Left ventricle myocardium inferior (tissue), 1 donor: ENCODE measurements at regions of chr22 and their contacts with region 1.

Region 1: GRCh38 chr22:20205964-20206708 is 55.3 kb upstream of the CCDC188 start:
- DNase-seq: peak; percentile 67
- H3K4me3 ChIP-seq: peak overlapping the region; percentile 73
- H3K27ac ChIP-seq: peak overlapping the region; percentile 89
- H3K4me1 ChIP-seq: peaks cover 60% of the 10 kb centered on the region
- H3K27me3 ChIP-seq: no peaks in the 10 kb centered on the region
- CTCF ChIP-seq: no peak

Region 2: GRCh38 chr22:20052309-20053259 is 153.6 kb before region 1 on chr22:
- intact Hi-C with region 1: no loop called
- DNase-seq: no peak
- H3K4me3 ChIP-seq: no peak overlapping the region
- H3K27ac ChIP-seq: no peak overlapping the region
- H3K4me1 ChIP-seq: peaks cover 20% of the 10 kb centered on the region
- H3K27me3 ChIP-seq: no peaks in the 10 kb centered on the region
- CTCF ChIP-seq: no peak

Region 3: DNA sequence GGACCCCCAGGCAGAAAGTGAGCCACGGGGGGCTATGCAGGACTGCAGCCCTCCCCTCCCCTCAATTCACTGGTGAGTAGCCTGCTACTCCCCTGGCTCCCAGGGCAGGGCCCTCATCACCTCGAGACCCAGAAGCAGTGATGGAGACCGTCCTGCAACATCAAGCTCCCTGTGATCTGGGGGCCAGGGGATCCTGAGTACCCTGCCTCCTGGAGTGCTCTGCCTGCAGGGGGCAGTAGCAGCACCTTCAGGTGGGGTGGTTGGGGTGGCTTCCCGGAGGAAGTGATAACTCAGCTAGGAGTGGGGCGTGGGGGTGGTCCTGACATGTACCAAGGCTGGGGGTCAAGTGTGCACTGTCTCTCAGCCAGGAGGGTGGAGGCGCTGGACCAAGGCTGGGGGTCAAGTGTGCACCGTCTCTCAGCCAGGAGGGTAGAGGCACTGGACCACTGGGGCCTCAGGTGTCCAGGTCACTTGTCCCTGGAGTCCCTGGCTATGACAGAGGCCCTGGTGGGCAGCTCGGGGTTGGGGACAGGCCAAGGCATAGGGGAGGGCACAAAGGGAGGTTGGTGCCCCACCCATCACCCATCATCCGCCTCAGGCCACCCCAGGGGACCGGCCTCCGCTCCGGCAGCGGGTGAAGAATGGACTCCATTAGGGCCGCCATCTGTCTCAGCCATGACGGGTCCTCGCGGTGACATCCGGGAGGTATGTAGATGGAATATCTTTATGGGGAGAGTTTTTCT is 52.6 kb after region 1 on chr22:
- intact Hi-C with region 1: loop called (anchors 10 kb)
- DNase-seq: no peak
- H3K4me3 ChIP-seq: no peak overlapping the region
- H3K27ac ChIP-seq: no peak overlapping the region
- H3K4me1 ChIP-seq: no peaks in the 10 kb centered on the region
- H3K27me3 ChIP-seq: no peaks in the 10 kb centered on the region
- CTCF ChIP-seq: no peak